GM13977 (cell line): ENCODE measurements at regions of chr7 and their contacts with region 1.

Region 1: DNA sequence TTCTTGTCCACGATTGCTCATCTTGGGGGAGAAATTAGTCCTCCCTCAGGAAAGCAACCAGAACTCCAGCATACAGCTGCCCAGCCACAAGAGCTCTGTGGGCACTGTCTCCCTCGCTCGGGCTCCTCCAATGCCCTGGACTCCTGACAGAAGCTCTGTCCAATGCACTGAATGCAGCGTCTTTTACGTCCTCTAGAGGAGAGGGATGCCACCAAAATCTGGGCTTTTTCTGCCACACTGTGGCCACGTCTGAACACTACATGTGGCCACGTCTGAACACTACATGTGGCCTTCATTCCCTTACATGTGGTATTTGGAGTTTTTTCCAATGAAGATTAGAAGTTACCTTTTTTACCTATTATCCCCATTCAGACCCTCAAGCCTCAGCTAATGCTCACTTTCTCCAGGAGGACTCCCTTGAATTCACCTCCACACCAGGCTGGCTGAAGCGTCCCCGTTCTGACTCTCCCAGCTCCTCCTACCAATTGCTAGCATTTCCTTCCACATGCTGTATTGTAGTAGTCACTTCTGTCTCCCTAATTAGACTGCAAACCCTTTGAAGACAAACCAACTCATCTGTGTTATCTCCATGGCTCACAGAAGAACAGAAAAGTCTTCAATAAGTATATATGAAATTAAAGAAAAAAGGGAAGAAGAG is 134.3 kb upstream of the PDE1C start:
- DNase-seq: peak; percentile 29
- CTCF ChIP-seq: peak; percentile 60

Region 2: DNA sequence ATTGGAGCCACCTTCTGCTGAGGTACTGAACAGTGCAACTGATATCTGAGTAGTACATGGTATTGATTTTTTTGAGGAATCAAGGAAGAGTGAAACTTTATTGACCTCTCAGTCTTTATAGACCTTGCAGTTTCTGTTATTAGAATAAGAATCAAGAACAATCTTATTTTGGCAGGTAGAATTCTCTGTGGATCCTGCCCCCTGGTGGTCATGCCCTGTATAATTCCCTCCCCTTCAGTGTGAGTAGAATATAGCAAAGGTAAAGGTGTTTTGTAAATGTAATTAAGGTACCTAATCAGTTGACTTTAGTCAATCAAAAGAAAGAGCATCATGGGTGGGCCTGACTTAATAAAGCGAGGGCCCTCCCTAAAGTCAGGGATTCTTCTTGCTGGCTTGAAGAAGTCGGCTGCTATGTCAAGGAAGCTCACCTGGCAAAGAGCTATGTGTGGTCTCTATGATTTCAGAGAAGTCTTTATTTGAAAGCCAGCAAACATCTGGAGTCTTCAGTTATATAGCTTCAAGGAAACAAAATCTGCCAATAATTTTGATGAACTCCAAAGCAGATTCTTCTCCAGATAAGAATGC is 142.8 kb after region 1 on chr7:
- in situ Hi-C with region 1: loop called (anchors 25 kb)
- DNase-seq: peak; percentile 36
- CTCF ChIP-seq: peak; percentile 71